ENCODE measurements at regions of chr7 and their contacts with region 1.

Region 1: GRCh38 chr7:10802526-10802925 is 171.1 kb upstream of the PHF14 start:
- DNase-seq: no peak
- ATAC-seq: no peak
- H3K4me3 ChIP-seq: no peak overlapping the region
- H3K27ac ChIP-seq: no peak overlapping the region
- H3K4me1 ChIP-seq: no peaks in the 10 kb centered on the region
- H3K27me3 ChIP-seq: no peaks in the 10 kb centered on the region
- CTCF ChIP-seq: no peak

Region 2: GRCh38 chr7:10266976-10267375 is 535.5 kb before region 1 on chr7:
- intact Hi-C with region 1: loop called in 1 of 2 experiments (anchors 10 kb)
- DNase-seq: no peak
- ATAC-seq: no peak
- H3K4me3 ChIP-seq: no peak overlapping the region
- H3K27ac ChIP-seq: no peak overlapping the region
- H3K4me1 ChIP-seq: no peaks in the 10 kb centered on the region
- H3K27me3 ChIP-seq: no peaks in the 10 kb centered on the region
- CTCF ChIP-seq: no peak

Measured in psoas muscle (tissue), 8 donors.